ENCODE measurements at regions of chr21 and their contacts with region 1.

Region 1: DNA sequence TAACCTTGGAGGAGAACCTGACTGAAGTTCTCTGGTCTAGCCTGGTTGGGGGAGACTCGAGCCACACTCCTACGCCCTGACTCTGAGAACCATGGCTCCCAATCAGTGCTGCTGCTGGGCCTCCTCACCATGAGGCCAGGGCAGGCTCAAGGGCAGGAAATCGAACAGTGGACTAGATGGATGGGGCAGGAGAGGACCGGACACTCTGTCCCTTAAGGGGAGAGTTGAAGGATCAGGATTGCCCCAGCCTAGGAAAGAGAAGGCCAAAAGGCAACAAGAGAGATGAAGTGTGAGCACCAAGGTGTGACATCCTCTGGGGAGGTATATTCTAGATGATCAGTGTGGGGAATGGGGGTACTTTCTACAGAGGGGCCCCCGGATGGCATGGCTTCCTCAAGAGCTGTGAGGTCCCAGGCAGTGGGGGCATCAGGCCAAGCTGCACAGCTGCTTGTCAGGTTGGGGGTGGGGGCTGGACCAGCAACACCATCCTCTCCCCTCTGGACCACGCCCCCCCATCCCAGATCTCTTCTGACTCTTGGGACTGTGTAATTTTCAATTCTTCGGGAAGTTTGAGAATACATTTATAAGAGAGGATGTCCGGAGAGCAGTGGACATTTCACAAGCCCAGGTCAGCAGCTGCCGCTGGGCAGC is 34.0 kb downstream of the MX1 start:
- DNase-seq: no peak
- ATAC-seq: no peak
- H3K4me3 ChIP-seq: no peak overlapping the region
- H3K27ac ChIP-seq: no peak overlapping the region
- H3K4me1 ChIP-seq: no peaks in the 10 kb centered on the region
- H3K27me3 ChIP-seq: no peaks in the 10 kb centered on the region
- CTCF ChIP-seq: no peak

Region 2: GRCh38 chr21:41152147-41152546 is 307.9 kb before region 1 on chr21:
- intact Hi-C with region 1: no loop called
- DNase-seq: no peak
- ATAC-seq: no peak
- H3K4me3 ChIP-seq: no peak overlapping the region
- H3K27ac ChIP-seq: no peak overlapping the region
- H3K4me1 ChIP-seq: no peaks in the 10 kb centered on the region
- H3K27me3 ChIP-seq: peaks cover 0 to 18% of the 10 kb centered on the region in 2 donors
- CTCF ChIP-seq: no peak

Region 3: GRCh38 chr21:41269535-41269934 is 190.5 kb before region 1 on chr21:
- intact Hi-C with region 1: no loop called
- DNase-seq: no peak
- ATAC-seq: no peak
- H3K4me3 ChIP-seq: no peak overlapping the region
- H3K27ac ChIP-seq: no peak overlapping the region
- H3K4me1 ChIP-seq: no peaks in the 10 kb centered on the region
- H3K27me3 ChIP-seq: no peaks in the 10 kb centered on the region
- CTCF ChIP-seq: no peak

Region 4: DNA sequence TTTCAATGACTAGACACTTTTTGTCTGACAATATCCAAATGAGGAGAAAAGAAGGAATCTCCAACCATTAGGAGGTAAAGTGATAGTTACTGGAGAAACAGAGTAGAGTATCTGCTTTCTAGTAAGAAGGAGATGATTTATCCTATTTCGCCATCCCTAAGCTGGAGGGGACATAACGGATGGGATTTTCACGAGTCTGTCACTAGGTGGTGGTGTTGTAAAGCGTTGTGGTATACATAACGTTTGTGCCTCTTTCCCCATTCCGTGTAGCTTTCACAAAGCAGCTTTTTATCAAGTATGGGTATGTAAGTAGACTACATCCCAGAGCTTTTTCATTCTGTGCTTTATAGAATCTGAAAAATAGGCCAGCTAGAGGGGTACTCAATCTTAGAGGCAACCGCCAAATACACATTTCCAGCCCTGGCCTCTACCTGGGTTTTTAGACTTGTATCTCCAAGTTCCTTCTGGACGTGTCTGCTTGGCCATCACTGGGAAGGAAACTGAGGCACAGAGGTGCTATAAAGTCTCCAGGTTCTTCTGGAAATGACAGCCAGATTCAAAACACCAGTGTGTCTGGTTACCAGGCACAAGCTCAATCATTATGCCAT is 176.7 kb before region 1 on chr21:
- intact Hi-C with region 1: loop called in 1 of 2 experiments (anchors 5 kb)
- DNase-seq: peak in 2 of 4 donors; percentile 69 to 86
- ATAC-seq: peak; percentile 99
- H3K4me3 ChIP-seq: no peak overlapping the region
- H3K27ac ChIP-seq: no peak overlapping the region
- H3K4me1 ChIP-seq: no peaks in the 10 kb centered on the region
- H3K27me3 ChIP-seq: no peaks in the 10 kb centered on the region
- CTCF ChIP-seq: peak; percentile 65 to 74